ENCODE measurements at regions of chr10 and their contacts with region 1.

Region 1: GRCh38 chr10:89701238-89702120 is at the start of gene KIF20B:
- DNase-seq: peak; percentile 91 to 97 (median 96)
- H3K4me3 ChIP-seq: peak within 1 kb of the TSS; percentile 49 to 98 (median 80)
- H3K27ac ChIP-seq: peak within 1 kb of the TSS in 57 of 59 donors; percentile 6 to 95 (median 80)
- H3K27me3 ChIP-seq: no peaks in the 10 kb centered on the region
- CTCF ChIP-seq: peak; percentile 34 to 85 (median 67)
- total RNA-seq, gene KIF20B: 1.5 to 8.3 (median 4.8) TPM

Region 2: DNA sequence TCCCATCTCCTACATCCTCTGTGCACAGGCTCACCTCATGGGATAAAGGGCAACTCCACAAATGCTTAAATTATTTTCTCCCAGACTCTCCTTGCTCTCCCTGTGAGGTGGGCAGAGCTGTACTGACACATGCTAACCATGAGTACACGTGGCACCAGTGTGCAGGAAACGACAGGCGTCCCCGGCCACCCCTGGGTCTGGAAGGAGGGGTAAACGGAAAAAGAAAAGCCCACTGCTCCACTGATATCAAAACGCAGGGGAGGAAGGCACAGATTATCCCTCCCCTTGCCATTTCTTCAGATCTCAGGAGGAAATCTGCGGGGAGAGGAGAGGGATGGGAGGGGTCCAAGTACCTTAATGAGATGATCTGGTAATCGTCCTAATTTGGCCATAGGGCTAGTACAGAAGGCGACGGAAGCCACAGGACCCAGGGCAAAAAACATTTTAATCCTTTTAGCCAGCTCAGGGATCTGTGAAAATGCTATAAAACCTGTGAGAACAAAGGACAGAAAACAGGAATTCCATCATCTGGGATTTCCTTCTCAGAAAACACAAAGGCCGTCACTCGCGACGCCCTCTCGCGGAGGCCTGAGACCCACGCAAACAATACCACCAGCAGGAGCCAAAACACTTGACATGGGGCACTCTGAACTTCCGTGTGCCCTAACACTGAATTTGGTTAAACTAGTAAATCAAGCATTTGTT is 476.6 kb before region 1 on chr10:
- intact Hi-C with region 1: loop called in 1 of 2 experiments (anchors 5 kb)
- DNase-seq: peak in 7 of 10 donors; percentile 44 to 62 (median 57)
- H3K4me3 ChIP-seq: peak overlapping the region in 37 of 59 donors; percentile 4 to 50 (median 27)
- H3K27ac ChIP-seq: peak overlapping the region in 58 of 59 donors; percentile 43 to 98 (median 82)
- H3K27me3 ChIP-seq: no peaks in the 10 kb centered on the region
- CTCF ChIP-seq: peak in 55 of 56 donors; percentile 20 to 82 (median 63)

Region 3: GRCh38 chr10:89414146-89414878 is 287.2 kb before region 1 on chr10 and contains the start of gene IFIT5:
- intact Hi-C with region 1: loop called in 1 of 2 experiments (anchors 10 kb)
- DNase-seq: peak; percentile 63 to 85 (median 72)
- H3K4me3 ChIP-seq: peak within 1 kb of the TSS; percentile 62 to 98 (median 87)
- H3K27ac ChIP-seq: peak within 1 kb of the TSS; percentile 80 to 99 (median 97)
- H3K27me3 ChIP-seq: no peaks in the 10 kb centered on the region
- CTCF ChIP-seq: peak in 20 of 56 donors; percentile 2 to 47 (median 24)
- total RNA-seq, gene IFIT5: 10.6 to 33.5 (median 19.0) TPM

Region 4: DNA sequence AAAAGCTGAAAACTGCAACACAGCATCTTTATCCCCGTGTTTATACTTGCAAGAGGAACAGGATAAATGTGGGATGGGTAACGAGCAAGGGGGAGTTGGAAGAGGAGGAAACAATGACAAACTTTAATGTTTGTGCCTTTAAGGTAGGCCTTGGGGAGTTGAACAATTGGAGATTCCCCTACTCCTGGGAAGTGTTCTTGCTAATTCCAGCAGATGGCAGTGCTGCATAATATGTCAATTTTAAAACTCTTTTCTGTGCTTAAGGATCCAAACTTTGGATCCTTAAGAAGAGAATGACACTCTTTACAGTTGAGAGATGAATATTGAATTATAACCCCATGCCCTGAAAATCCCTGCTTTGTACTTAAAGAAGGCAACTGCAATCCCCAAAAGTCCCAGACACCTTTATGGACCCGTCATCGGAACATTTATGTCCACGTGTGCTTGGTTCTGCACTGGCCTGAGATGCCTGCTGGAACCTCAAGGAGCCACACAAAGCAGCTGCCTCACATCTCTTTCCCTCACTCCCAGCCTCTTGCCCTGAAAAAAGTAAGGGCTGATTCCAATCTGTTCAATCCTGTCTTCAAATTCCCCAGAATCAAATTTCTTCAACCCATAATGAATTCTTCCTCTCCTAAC is 275.1 kb before region 1 on chr10:
- intact Hi-C with region 1: loop called in 1 of 2 experiments (anchors 5 kb)
- DNase-seq: no peak
- H3K4me3 ChIP-seq: no peak overlapping the region
- H3K27ac ChIP-seq: no peak overlapping the region
- H3K27me3 ChIP-seq: no peaks in the 10 kb centered on the region
- CTCF ChIP-seq: peak; percentile 68 to 92 (median 82)

Region 5: DNA sequence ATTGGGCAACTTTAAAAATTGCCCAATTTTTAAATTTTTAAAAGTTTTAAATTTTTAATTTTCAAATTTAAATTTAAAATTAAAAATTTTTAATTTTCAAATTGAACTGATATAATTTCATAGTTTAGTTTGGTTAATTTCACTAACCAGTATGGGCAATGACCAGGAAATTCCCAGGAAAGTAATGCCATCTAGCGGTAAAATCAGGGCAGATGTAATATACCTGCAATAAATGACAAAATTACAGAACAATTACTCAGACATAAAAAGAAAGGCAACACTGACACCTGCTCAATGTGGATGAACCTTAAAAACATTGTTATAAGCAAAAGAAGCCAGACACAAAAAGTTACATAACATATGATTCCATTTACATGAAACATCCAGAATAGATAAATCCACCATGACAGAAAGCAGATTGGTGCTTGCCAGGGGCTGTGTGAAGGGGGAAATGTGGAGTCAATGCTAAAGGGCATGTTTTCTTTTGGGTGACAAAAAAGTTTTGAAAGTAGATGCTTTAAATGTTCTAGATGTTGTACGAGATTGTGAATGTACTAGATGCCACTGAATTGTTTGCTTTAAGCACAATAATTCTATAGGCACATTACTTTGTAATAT is 137.5 kb before region 1 on chr10:
- intact Hi-C with region 1: loop called in 1 of 2 experiments (anchors 5 kb)
- DNase-seq: peak in 1 of 10 donors; percentile 13
- H3K4me3 ChIP-seq: no peak overlapping the region
- H3K27ac ChIP-seq: no peak overlapping the region
- H3K27me3 ChIP-seq: no peaks in the 10 kb centered on the region
- CTCF ChIP-seq: peak; percentile 67 to 92 (median 81)

Region 6: DNA sequence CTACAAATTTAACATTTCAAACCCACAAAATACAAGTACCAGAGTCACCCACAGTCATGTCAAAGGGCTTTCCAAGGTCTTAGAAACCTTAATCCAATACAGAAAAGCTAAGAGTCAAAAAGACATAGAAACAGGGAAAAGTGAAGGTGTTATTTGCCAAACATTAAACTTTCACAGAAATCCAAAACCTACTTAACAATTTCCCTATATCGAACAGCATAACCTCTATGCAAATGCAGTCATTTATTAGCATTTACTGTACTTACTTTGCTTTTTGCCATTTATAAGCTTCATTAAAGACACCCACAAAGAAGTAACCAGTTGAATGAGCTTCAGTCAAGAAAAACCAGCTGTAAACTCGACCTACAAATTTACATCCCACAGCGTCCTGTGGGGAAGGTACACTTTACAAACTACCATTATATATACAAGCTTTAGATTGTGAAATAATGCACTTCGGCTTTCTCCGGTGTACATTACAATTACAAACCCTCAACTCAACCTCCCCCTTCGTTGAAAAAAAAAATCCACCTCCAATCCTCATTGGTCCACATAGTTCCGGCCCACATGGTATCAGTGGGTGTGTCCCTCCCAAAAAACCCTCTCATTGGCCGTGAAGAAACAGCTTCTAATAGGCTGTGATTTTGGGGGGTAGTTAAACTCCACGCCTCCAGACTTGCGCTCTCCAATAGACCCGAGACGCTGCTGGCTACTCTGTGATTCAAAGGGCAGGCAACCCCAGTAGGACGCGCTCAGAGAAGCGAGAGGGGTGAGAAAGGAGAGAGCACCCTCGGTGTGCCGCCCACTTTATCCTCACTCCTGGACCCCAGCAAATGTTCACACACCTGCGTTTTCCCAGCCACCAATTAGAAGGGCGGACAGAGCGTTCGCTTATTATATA is 57.8 kb before region 1 on chr10:
- intact Hi-C with region 1: loop called (anchors 1 to 2 kb)
- DNase-seq: peak; percentile 47 to 92 (median 83)
- H3K4me3 ChIP-seq: peak overlapping the region; percentile 56 to 97 (median 83)
- H3K27ac ChIP-seq: peak overlapping the region; percentile 7 to 98 (median 89)
- H3K27me3 ChIP-seq: no peaks in the 10 kb centered on the region
- CTCF ChIP-seq: peak in 6 of 56 donors; percentile 9 to 18 (median 12)